Heart right ventricle (tissue), 16 donors: ENCODE measurements at regions of chr6 and their contacts with region 1.

Region 1: DNA sequence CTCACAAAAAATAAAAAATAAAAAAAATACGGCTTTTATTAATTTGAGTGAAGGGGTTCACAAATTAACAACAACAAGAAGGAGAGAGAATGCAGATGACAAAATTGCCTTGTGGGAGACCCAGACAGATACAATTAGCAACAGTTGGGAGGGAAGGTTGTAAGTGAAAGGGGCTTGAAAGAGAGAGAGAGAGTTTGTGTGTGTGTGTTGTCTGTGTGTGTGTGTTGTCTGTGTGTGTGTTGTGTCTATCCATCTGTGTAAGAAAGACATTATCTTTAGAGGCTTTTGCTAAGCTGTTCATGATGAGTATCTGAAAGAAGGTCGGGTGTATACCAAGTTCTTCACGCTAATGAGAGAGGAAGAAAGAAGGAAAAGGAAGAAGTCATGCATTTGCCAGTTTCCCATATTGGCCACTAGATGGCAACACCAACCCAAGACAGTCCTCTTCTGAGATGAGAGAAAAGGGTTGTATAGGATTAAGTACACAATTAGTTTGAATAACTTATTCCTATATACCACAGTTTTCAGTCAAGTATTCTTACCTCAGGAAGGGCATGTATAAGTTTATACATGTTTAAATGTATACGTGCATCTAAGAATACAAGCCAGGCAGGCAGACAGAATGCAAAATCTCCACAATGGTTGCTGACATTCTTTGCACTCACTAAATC is 63.7 kb upstream of the CD2AP start:
- DNase-seq: peak in 1 of 2 donors; percentile 34
- ATAC-seq: peak in 7 of 8 donors; percentile 68 to 95 (median 89)
- H3K4me3 ChIP-seq: peak overlapping the region in 9 of 10 donors; percentile 1 to 54 (median 47)
- H3K27ac ChIP-seq: peak overlapping the region in 8 of 10 donors; percentile 14 to 83 (median 60)
- H3K4me1 ChIP-seq: peaks cover 0 to 23% (median 0%) of the 10 kb centered on the region in 9 donors
- H3K27me3 ChIP-seq: no peaks in the 10 kb centered on the region
- CTCF ChIP-seq: peak; percentile 73 to 93 (median 87)

Region 2: GRCh38 chr6:47524136-47524845 is 110.4 kb after region 1 on chr6:
- intact Hi-C with region 1: loop called in 1 of 10 experiments (anchors 10 kb)
- DNase-seq: no peak
- ATAC-seq: no peak
- H3K4me3 ChIP-seq: no peak overlapping the region
- H3K27ac ChIP-seq: peak overlapping the region in 1 of 10 donors; percentile 21
- H3K4me1 ChIP-seq: peaks cover 0 to 40% (median 12%) of the 10 kb centered on the region in 9 donors
- H3K27me3 ChIP-seq: no peaks in the 10 kb centered on the region
- CTCF ChIP-seq: no peak

Region 3: GRCh38 chr6:47603995-47604394 is 190.1 kb after region 1 on chr6:
- intact Hi-C with region 1: loop called in 5 of 10 experiments (anchors 10 kb)
- DNase-seq: no peak
- ATAC-seq: peak in 1 of 8 donors; percentile 63
- H3K4me3 ChIP-seq: no peak overlapping the region
- H3K27ac ChIP-seq: peak overlapping the region in 1 of 10 donors; percentile 23
- H3K4me1 ChIP-seq: peaks cover 0 to 22% (median 5%) of the 10 kb centered on the region in 9 donors
- H3K27me3 ChIP-seq: no peaks in the 10 kb centered on the region
- CTCF ChIP-seq: no peak

Region 4: GRCh38 chr6:47631269-47631772 is 217.4 kb after region 1 on chr6:
- intact Hi-C with region 1: loop called in 5 of 10 experiments (anchors 2 to 10 kb)
- DNase-seq: no peak
- ATAC-seq: peak; percentile 55 to 87 (median 70)
- H3K4me3 ChIP-seq: no peak overlapping the region
- H3K27ac ChIP-seq: peak overlapping the region in 3 of 10 donors; percentile 31 to 65 (median 47)
- H3K4me1 ChIP-seq: peaks cover 0 to 39% (median 17%) of the 10 kb centered on the region in 9 donors
- H3K27me3 ChIP-seq: no peaks in the 10 kb centered on the region
- CTCF ChIP-seq: peak; percentile 58 to 85 (median 75)

Region 5: DNA sequence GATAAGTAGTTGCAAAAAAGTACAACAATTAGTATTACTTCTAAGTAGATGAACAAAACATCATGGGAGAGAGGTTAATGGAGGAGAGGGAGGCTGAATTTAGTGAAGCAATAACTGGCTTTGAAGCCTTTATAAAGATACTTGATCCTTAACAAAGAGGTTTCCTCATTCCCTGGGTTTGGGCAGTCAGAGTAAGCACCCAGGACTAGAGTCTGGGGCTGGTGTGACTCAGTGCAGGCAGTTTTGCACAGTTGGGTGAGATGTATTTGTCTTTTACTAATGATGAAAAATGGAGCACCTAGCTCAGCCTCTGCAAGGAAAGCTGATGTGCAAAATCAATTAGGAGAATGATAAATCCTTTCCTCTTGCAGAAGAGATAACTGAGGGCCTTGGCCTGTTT is 356.1 kb after region 1 on chr6:
- intact Hi-C with region 1: loop called in 3 of 10 experiments (anchors 5 to 10 kb)
- DNase-seq: no peak
- ATAC-seq: no peak
- H3K4me3 ChIP-seq: no peak overlapping the region
- H3K27ac ChIP-seq: no peak overlapping the region
- H3K4me1 ChIP-seq: no peaks in the 10 kb centered on the region
- H3K27me3 ChIP-seq: no peaks in the 10 kb centered on the region
- CTCF ChIP-seq: no peak

Region 6: DNA sequence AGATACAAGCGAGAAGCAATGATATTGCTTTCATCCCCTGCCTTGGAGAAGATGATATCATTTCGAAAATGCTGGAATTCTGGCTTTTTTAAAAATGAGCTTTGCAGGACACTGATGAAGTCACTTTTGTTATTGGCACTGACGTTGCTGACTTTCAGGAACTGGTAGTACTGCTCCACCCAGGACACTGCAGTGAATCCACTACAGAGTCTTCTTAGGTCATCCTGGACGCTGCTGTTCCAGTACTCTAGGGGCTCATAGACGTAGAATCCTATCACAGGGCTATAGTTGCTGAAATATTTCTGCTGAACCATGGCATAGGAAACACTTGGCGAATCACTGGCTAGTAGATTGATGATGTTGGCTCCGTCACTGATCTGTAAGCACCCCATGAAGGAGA is 465.1 kb after region 1 on chr6:
- intact Hi-C with region 1: no loop called
- DNase-seq: no peak
- ATAC-seq: no peak
- H3K4me3 ChIP-seq: no peak overlapping the region
- H3K27ac ChIP-seq: no peak overlapping the region
- H3K4me1 ChIP-seq: no peaks in the 10 kb centered on the region
- H3K27me3 ChIP-seq: no peaks in the 10 kb centered on the region
- CTCF ChIP-seq: no peak